ENCODE measurements at regions of chr9 and their contacts with region 1.

Region 1: DNA sequence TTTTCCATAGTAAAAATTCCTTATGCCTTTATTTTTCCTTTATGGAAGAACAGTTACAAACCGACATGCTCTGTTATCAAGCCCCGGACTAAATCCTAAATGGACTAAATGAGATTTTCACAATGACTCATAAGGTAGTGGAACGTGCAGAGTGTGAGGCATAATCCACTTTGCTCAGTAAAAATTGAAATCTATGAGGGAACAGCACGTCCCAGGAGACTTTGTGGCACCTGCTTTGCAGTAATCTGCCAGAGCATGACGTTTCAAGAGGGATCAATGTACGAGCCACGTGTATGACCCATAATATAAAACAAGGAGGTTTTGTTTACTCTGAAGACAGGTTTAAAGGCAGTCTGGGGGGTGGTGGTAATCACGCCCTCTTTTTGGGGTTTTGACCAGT is 83.8 kb upstream of the GNA14 start:
- DNase-seq: no peak

Region 2: GRCh38 chr9:76458903-76459690 is 1272.8 kb before region 1 on chr9 and contains the start of gene GCNT1:
- in situ Hi-C with region 1: no loop called
- DNase-seq: peak; percentile 87

Region 3: GRCh38 chr9:77433675-77434445 is 298.1 kb before region 1 on chr9:
- in situ Hi-C with region 1: loop called (anchors 25 kb)
- DNase-seq: peak; percentile 65

Region 4: GRCh38 chr9:77588271-77588937 is 143.5 kb before region 1 on chr9:
- in situ Hi-C with region 1: no loop called
- DNase-seq: peak; percentile 49

Region 5: GRCh38 chr9:78207319-78207718 is 475.4 kb after region 1 on chr9:
- in situ Hi-C with region 1: no loop called
- DNase-seq: no peak